GM10248 (cell line): ENCODE measurements at regions of chr20 and their contacts with region 1.

Region 1: DNA sequence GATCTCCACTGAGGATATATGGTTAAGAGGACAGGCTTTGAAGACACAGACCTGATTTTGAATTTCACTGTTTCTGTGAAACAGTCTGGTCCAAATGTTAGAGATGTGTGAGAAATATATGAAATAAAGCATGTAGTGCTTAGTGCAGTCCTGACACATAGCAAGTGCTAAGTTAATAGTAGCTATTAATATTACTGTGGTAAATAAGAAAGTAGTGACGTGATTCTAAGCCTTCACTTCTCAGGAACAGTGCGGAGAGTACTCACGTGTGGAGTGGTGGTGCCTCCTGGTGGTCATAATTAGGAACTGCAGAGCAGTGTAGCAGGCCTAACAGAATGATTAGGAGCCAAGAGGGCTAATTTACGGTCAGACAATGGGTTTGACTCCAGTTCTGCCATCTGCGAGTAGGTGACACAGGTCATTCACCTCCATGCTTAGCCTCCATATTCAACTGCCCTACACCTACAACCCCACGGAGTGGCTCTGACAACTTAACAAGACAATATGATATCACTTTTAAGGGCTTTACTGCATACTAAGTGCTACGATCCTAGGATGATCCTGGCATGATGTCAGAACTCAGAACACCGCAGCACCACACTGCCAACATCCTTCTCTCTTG is 106.2 kb downstream of the JPH2 start:
- DNase-seq: peak; percentile 86
- CTCF ChIP-seq: peak; percentile 95

Region 2: DNA sequence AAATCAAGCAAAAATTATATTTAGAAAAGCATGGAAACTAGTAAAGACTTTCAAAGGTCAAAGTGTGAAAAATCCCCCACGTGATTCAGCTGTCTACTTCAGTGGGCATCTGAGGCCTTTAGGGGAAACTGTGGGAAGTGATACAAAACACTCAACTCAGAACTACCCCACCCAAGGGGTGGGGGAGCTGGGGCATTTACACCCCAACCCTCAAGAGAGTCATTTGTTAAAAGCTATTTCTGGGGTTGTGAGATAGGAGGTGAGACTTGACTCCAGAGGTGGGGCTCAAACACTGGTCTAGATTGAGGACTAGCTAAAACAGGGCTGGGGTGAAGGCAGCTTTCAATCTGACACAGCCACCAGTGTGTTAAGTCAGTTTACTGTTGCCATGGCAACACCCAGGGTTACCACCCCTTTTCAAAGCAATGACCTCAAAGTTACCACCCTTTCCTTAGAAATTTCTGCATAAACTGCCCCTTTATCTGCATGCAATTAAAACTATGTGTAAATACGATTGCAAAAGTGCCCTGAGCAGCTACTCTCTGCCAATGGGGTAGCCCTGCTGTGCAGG is 344.1 kb before region 1 on chr20:
- CTCF ChIA-PET with region 1: interaction called, 12 read pairs
- POLR2A ChIA-PET with region 1: no interaction called
- DNase-seq: peak; percentile 73
- CTCF ChIP-seq: no peak

Region 3: GRCh38 chr20:43934833-43935232 is 145.9 kb before region 1 on chr20:
- CTCF ChIA-PET with region 1: no interaction called
- POLR2A ChIA-PET with region 1: no interaction called
- DNase-seq: no peak
- CTCF ChIP-seq: no peak

Region 4: DNA sequence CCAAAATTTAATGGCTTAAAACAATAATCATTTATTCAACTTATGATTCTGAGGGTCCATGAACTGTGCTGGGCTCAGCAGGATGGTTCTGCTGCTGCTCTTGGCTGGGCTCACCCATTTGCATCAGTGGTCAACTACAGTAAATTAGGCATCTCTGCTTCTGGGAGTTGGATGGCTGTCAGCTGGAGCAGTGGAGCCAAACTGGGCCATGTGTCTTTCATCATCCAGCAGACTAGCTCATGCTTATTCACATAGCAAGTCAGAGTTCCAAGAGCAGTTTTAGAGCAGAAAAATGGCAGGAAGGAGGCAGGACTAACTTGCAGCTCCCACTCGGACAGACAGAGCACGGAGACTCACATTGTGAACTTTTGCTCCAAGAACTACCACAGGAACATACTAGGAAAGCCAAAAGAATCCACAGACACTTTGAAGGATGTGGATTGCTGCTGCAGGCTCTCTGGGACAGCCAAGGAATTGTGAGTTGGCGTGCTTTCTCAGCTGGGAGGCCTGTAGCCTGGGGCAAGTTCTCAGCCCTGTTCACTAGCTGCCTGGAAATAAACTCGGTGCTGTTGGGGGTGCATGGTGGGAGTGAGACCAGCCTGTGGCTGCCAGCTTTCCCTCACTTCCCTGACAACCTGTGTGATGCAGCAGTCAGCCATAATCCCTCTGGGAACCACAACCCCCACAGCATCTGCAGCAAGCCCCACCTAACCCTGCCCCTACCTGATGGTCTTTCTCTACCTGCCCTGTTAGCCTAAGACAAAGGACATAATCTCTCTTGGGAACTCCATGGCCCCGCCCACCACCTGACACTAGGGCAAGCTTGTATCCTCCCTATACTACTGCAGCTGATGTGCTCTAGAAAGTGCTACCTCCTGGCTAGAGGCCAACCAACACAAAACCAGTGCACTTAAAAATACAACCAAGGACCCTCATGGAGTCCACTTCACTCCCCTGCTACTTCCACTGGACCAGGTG is 22.8 kb before region 1 on chr20:
- CTCF ChIA-PET with region 1: interaction called, 14 read pairs
- POLR2A ChIA-PET with region 1: no interaction called
- DNase-seq: no peak
- CTCF ChIP-seq: no peak

Region 5: GRCh38 chr20:44069203-44070011 is 11.3 kb before region 1 on chr20:
- CTCF ChIA-PET with region 1: interaction called, 18 read pairs
- POLR2A ChIA-PET with region 1: no interaction called
- DNase-seq: peak; percentile 51
- CTCF ChIP-seq: no peak

Region 6: DNA sequence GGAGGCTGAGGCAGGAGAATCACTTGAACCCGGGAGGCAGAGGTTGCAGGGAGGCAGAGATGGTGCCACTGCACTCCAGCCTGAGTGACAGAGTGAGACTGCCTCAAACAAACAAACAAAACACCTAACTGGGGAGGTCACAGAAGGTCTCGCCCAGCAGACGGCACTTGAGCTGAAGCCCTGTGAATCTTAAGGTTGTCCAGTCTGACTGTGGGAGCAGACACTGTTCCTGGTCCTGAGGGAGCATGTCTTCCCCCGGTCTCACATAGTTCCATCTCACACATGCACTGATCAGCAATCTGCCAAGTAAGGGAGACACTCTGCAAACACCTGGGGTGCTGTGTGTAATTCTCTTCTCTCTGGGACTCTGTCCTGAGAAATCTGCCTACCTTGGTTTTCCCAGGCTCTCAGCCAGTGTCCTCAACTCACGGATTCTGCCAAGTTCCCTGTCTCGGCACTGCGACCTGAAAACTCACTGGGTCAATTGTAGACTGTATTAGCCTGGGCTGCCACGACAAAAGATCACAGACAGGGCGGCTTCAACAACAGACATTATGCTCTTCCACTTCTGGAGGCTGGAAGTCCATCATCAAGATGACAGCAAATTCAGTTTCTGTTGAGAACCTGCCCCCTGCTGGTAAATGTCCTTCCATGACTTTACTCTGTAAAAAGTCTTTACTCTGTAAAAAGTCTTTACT is 11.9 kb after region 1 on chr20:
- CTCF ChIA-PET with region 1: interaction called, 29 read pairs
- POLR2A ChIA-PET with region 1: no interaction called
- DNase-seq: no peak
- CTCF ChIP-seq: peak; percentile 45

Region 7: DNA sequence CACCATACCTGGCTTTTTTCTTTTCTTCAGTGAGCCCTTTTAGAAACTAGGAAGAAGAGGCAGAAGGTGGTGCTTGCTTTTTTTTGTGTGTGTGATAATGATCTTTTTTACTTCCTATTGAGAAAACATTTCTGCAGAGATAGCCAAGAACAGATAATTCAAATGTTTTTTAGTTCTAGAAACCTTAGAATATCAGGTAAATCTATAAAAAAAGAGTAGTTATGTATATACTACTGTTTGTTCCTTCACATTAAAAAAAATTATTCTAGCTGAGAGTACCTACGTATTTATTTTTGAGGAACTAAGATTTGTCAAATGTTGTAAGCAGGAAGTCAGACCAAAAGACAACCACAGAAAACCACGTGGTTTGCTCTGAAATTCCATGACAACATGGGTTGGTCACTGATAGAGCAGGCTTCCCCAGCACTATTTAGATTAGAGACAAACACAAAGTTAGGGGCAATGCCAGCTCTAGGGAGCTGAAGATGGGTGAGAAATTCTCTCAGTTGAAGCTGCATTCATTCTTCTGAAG is 898.4 kb after region 1 on chr20:
- CTCF ChIA-PET with region 1: no interaction called
- POLR2A ChIA-PET with region 1: no interaction called
- DNase-seq: peak; percentile 65
- CTCF ChIP-seq: no peak